Psoas muscle (tissue), 8 donors: ENCODE measurements at regions of chr2 and their contacts with region 1.

Region 1: GRCh38 chr2:127064642-127065250 is 42.2 kb downstream of the BIN1 start:
- DNase-seq: peak; percentile 97 to 98
- ATAC-seq: peak; percentile 69 to 78 (median 74)
- H3K4me3 ChIP-seq: peak overlapping the region; percentile 44
- H3K27ac ChIP-seq: peak overlapping the region; percentile 98
- H3K4me1 ChIP-seq: peaks cover 70% of the 10 kb centered on the region
- H3K27me3 ChIP-seq: no peaks in the 10 kb centered on the region
- CTCF ChIP-seq: no peak

Region 2: GRCh38 chr2:127100251-127101047 is 35.7 kb after region 1 on chr2:
- intact Hi-C with region 1: loop called (anchors 2 to 5 kb)
- DNase-seq: peak; percentile 47 to 59
- ATAC-seq: peak in 2 of 4 donors; percentile 3
- H3K4me3 ChIP-seq: peak overlapping the region; percentile 25
- H3K27ac ChIP-seq: peak overlapping the region; percentile 98
- H3K4me1 ChIP-seq: peaks cover 75% of the 10 kb centered on the region
- H3K27me3 ChIP-seq: no peaks in the 10 kb centered on the region
- CTCF ChIP-seq: no peak

Region 3: DNA sequence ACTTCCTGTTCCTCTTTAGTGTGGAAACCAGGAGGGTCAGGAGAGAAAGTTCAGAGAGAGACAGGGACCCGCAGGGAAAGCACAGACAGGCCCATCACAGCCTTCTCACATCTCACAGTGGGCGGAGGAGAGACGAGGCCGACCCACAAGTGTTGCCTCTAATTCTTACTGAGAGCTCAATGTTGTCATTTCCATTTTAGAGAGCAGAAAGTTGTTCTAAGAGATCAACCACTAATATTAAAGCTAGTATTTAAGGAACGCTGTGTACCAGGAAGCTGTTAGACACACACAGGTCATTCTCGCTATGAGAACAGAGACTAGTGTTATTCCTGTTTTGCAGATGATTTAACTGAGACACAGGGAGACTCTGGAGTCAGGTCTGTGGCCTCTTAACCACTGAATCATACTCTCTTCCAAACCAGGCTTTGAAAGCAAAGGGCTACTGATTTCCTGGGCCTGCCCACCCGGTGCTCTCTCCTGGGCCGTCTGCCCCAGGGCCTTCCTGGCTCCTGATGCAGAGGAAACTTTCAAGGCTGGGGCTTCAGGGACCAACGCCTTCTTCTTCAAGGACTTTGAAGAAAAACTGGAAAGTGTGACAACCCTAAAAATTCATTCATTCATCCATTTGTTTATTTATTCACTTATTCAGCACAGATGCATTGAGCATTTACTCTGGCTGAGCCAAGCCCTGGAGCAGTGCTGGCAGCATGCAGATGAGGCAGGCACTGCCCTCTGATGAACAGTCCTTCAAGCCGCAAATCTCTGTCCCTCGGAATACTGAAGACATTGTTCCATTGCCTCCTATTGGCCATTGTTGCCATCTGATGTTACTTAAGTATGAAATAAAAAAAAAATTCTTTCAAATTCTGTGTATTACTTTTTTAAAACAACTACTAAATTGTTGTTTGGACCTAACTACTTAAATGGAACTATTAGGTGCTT is 79.4 kb after region 1 on chr2:
- intact Hi-C with region 1: loop called in 1 of 2 experiments (anchors 2 kb)
- DNase-seq: no peak
- ATAC-seq: peak; percentile 38 to 61 (median 58)
- H3K4me3 ChIP-seq: no peak overlapping the region
- H3K27ac ChIP-seq: peak overlapping the region; percentile 96
- H3K4me1 ChIP-seq: peaks cover 54% of the 10 kb centered on the region
- H3K27me3 ChIP-seq: no peaks in the 10 kb centered on the region
- CTCF ChIP-seq: peak; percentile 30

Region 4: GRCh38 chr2:127153691-127154158 is 89.0 kb after region 1 on chr2:
- intact Hi-C with region 1: loop called in 1 of 2 experiments (anchors 5 kb)
- DNase-seq: peak; percentile 68 to 86
- ATAC-seq: peak; percentile 75 to 86 (median 84)
- H3K4me3 ChIP-seq: no peak overlapping the region
- H3K27ac ChIP-seq: peak overlapping the region; percentile 89
- H3K4me1 ChIP-seq: peaks cover 33% of the 10 kb centered on the region
- H3K27me3 ChIP-seq: no peaks in the 10 kb centered on the region
- CTCF ChIP-seq: no peak

Region 5: GRCh38 chr2:127174136-127174535 is 109.4 kb after region 1 on chr2:
- intact Hi-C with region 1: loop called in 1 of 2 experiments (anchors 5 kb)
- DNase-seq: peak in 1 of 2 donors; percentile 45
- ATAC-seq: peak; percentile 72 to 80 (median 76)
- H3K4me3 ChIP-seq: no peak overlapping the region
- H3K27ac ChIP-seq: peak overlapping the region; percentile 60
- H3K4me1 ChIP-seq: peaks cover 44% of the 10 kb centered on the region
- H3K27me3 ChIP-seq: no peaks in the 10 kb centered on the region
- CTCF ChIP-seq: peak; percentile 44

Region 6: GRCh38 chr2:127293748-127294562 is 229.2 kb after region 1 on chr2 and contains the start of gene ERCC3:
- intact Hi-C with region 1: loop called in 1 of 2 experiments (anchors 2 kb)
- DNase-seq: peak; percentile 87 to 93
- ATAC-seq: peak; percentile 94 to 98 (median 96)
- H3K4me3 ChIP-seq: peak within 1 kb of the TSS; percentile 93
- H3K27ac ChIP-seq: peak within 1 kb of the TSS; percentile 86
- H3K4me1 ChIP-seq: peaks cover 10% of the 10 kb centered on the region
- H3K27me3 ChIP-seq: no peaks in the 10 kb centered on the region
- CTCF ChIP-seq: no peak
- total RNA-seq, gene ERCC3: 28.2 to 31.2 (median 29.2) TPM